Endothelial cell of umbilical vein (primary cell): ENCODE measurements at regions of chr11 and their contacts with region 1.

Region 1: GRCh38 chr11:32297611-32298011 is 137.7 kb downstream of the WT1 start:
- DNase-seq: peak; percentile 20
- H3K4me3 ChIP-seq: no peak overlapping the region
- H3K27ac ChIP-seq: no peak overlapping the region
- H3K4me1 ChIP-seq: no peaks in the 10 kb centered on the region
- H3K27me3 ChIP-seq: no peaks in the 10 kb centered on the region
- CTCF ChIP-seq: no peak
- POLR2A ChIP-seq: no peak

Region 2: DNA sequence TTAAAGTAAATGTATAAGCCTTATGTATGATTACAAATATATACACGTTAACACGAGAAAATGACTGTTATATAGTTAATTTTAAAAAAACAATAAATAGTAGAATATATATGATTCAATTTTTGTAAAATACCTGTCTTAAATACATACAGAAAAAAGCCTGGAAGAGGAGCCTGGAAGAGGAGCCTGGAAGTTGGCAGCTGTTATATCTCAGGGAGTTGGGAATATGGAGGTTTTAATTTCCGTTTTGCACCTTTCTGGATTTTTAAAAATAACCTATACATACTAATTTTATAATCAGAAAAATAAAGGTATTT is 26.2 kb after region 1 on chr11:
- CTCF ChIA-PET with region 1: interaction called, 17 read pairs
- POLR2A ChIA-PET with region 1: no interaction called
- dilution Hi-C with region 1: no loop called
- intact Hi-C with region 1: no loop called
- DNase-seq: no peak
- H3K4me3 ChIP-seq: no peak overlapping the region
- H3K27ac ChIP-seq: no peak overlapping the region
- H3K4me1 ChIP-seq: no peaks in the 10 kb centered on the region
- H3K27me3 ChIP-seq: peaks cover 0 to 5% of the 10 kb centered on the region in 2 experiments
- CTCF ChIP-seq: no peak
- POLR2A ChIP-seq: no peak